ENCODE measurements at regions of chr3 and their contacts with region 1.

Region 1: DNA sequence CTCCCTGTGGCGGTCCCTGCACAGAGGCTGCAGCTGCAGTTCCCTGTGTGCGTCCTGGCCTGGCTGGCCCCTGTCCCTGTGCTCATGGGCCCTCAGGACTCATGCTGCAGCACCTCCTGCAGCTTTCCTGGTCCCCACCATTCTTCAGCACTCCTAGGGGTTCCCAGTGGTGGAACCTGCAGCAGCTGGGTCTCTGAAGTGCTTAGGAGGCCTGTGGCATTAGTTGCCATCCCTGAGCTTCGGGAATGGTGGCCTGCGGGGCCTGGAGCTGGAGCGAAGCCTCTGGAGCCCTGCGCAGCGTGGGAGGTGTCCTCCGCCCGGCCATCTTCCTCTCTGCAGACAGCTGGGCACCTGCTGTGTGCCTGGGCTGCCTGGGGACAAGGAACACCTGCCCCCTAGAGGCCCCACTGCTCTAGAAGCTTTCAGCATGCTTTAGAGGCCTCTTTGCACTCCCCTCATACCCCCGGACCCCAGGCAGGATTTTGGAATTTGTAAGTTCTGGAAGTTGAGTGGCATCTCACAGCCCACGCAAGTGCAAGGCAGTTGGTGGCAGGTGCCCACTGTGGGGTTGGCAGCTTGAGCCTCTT is 13.1 kb downstream of the PLXNA1 start:
- DNase-seq: no peak
- H3K4me3 ChIP-seq: no peak overlapping the region
- H3K27ac ChIP-seq: no peak overlapping the region
- H3K4me1 ChIP-seq: peaks cover 16 to 39% of the 10 kb centered on the region in 2 donors
- H3K27me3 ChIP-seq: no peaks in the 10 kb centered on the region
- CTCF ChIP-seq: no peak
- POLR2A ChIP-seq: no peak

Region 2: DNA sequence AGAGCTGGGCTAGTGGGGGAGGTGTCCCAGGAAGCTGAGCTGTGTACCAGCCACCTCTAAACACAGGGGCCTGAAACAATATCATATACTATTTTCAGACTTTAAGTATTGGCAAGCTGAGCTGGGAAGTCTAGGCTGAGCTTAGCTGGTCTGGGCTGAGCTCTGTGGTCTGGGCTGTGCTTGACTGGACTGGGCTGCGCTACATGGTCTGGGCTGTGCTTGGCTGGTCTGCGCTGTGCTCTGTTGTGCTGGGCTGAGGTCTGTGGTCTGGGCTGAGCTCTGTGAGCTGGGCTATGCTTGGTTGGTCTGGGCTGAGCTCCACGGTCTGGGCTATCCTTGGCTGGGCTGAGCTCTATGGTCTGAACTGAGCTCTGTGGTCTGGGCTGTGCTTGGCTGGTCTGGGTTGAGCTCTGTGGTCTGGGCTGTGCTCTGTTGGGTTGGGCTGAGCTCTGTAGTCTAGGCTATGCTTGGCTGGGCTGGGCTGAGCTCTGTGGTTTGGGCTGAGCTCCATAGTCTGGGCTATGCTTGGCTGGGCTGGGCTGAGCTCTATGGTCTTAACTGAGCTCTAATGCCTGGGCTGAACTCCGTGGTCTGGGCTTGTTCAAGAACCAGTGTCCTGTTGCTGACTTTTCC is 78.8 kb after region 1 on chr3:
- intact Hi-C with region 1: no loop called
- DNase-seq: peak; percentile 87 to 92
- H3K4me3 ChIP-seq: no peak overlapping the region
- H3K27ac ChIP-seq: peak overlapping the region; percentile 55 to 80 (median 67)
- H3K4me1 ChIP-seq: peaks cover 52 to 63% of the 10 kb centered on the region in 2 donors
- H3K27me3 ChIP-seq: no peaks in the 10 kb centered on the region
- CTCF ChIP-seq: no peak
- POLR2A ChIP-seq: no peak

Region 3: DNA sequence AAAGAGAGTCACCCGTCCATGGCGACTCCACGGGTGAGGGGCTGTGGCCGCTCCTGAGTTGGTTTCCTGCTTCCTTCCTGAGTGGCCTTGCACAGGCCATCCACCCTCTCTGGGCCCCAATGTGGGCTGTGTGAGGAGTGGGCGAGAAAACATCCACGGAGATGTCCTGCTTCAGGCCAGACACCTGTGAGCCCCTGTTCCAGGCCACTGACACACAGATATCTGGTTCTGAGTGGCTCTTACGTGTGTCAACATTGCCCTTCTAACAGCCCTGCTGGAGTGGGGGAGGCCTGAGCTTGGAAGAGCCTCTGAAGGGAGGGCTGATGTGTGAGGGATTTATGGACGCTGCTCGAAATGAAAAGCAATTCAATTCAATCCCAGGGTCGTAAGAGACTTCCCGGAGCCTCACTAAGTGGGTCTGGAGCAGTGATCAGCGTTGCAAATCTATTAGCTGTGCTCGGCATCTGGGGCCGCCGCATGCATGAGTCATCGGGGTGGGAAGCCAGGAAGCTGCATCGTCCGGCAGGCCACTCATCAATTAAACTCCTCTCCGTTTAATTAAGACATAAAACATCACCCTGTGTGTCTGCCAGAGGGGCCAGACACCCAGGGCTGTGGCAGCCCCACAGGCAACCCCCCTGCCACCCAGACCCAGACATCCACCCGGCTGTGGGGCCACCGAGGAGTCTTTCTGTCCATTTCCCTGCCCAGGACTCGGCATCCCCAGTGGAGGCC is 176.9 kb after region 1 on chr3:
- intact Hi-C with region 1: loop called (anchors 5 kb)
- DNase-seq: peak; percentile 55 to 56
- H3K4me3 ChIP-seq: no peak overlapping the region
- H3K27ac ChIP-seq: peak overlapping the region in 1 of 3 donors; percentile 17
- H3K4me1 ChIP-seq: peaks cover 19 to 33% of the 10 kb centered on the region in 2 donors
- H3K27me3 ChIP-seq: no peaks in the 10 kb centered on the region
- CTCF ChIP-seq: no peak
- POLR2A ChIP-seq: no peak

Region 4: DNA sequence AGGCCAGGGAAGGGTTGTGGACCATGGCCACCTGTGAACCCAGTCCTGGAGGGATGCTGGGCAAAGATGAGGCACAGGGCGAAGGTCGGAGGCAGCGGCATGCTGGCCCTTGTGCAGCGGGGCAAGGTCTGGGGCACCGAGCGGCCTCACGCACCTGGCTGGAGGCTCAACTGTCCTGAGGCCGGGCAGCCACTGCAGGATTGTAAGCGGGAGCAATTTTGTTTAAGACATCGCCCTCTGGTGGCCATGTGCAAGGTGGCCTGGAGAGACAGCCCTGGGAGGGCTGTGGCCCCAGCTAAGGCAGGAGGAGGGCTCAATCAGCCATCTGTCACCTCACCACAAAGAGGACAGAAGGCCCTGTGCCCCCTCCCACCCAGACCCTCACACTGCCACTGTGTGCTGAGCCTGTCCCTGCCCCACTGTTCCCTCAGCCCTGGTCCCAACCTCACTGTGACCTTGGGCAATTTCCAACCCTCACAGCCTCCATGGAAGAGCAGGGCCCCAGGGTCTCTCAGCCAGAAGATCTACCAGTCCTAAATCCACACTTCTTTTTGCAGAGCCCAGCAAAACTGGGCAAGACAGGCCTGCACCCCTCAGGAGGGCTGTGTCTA is 548.3 kb after region 1 on chr3:
- intact Hi-C with region 1: loop called (anchors 10 kb)
- DNase-seq: peak; percentile 69 to 74
- H3K4me3 ChIP-seq: no peak overlapping the region
- H3K27ac ChIP-seq: no peak overlapping the region
- H3K4me1 ChIP-seq: peaks cover 10 to 23% of the 10 kb centered on the region in 2 donors
- H3K27me3 ChIP-seq: no peaks in the 10 kb centered on the region
- CTCF ChIP-seq: peak; percentile 49 to 85 (median 64)
- POLR2A ChIP-seq: no peak